Common myeloid progenitor, CD34-positive (primary cell): ENCODE measurements at regions of chr19 and their contacts with region 1.

Region 1: GRCh38 chr19:2084993-2085720 is 11.0 kb downstream of the MOB3A start:
- DNase-seq: peak; percentile 97 to 99 (median 99)
- H3K4me3 ChIP-seq: peak overlapping the region; percentile 19 to 73 (median 53)
- H3K27ac ChIP-seq: peak overlapping the region; percentile 74 to 93
- H3K4me1 ChIP-seq: peaks cover 7 to 91% (median 85%) of the 10 kb centered on the region in 4 experiments
- H3K27me3 ChIP-seq: no peaks in the 10 kb centered on the region

Region 2: DNA sequence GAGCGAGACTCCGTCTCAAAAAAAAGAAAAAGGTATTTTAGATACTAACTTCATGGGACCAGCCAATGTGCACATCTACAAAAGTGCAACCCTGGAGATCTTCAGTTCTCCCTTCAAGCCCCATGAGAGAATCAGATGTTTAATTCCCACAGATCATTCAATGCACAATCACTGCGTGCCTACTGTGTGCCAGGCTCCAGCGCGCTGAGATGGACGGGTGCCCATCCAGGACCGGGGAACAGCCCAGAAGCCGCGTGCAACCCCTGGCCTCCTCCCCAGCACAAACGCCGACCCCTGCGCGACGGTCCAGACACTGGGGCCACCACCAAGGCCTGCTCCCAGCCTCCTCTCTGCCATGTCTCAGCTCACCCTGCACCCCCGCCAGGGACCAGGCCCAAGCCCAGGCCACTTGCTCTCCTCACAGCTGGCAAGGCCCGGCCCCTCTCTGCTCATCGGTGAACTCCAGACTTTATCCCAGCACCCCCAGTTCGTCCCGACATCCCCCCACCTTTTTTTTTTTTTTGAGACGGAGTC is 75.0 kb before region 1 on chr19:
- CTCF ChIA-PET with region 1: no interaction called
- POLR2A ChIA-PET with region 1: no interaction called
- DNase-seq: no peak
- H3K4me3 ChIP-seq: no peak overlapping the region
- H3K27ac ChIP-seq: no peak overlapping the region
- H3K4me1 ChIP-seq: peaks cover 0 to 29% (median 15%) of the 10 kb centered on the region in 4 experiments
- H3K27me3 ChIP-seq: no peaks in the 10 kb centered on the region

Region 3: GRCh38 chr19:2041683-2042484 is 43.3 kb before region 1 on chr19:
- CTCF ChIA-PET with region 1: no interaction called
- POLR2A ChIA-PET with region 1: no interaction called
- DNase-seq: peak; percentile 96 to 99 (median 98)
- H3K4me3 ChIP-seq: peak overlapping the region in 5 of 7 experiments; percentile 29 to 72 (median 54)
- H3K27ac ChIP-seq: peak overlapping the region; percentile 90 to 92
- H3K4me1 ChIP-seq: peaks cover 0 to 46% (median 34%) of the 10 kb centered on the region in 4 experiments
- H3K27me3 ChIP-seq: no peaks in the 10 kb centered on the region

Region 4: DNA sequence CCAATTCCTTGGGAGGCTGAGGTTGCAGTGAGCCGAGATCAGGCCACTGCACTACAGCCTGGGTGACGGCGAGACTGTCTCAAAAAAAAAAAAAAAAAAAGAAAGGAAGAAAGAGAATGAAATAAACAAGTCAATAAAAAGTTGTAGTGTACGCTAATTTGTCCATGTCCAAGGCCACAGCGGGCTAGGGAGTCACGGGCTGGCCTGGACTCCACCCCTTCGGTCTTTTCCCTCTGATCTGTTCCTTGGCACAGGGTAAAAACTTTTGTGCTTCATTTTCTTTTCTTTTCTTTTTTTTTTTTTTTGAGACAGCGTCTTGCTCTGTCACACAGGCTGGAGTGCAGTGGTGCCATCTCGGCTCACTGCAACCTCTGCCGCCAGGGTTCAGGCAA is 14.7 kb before region 1 on chr19:
- CTCF ChIA-PET with region 1: interaction called, 19 read pairs
- POLR2A ChIA-PET with region 1: interaction called, 4 read pairs
- DNase-seq: no peak
- H3K4me3 ChIP-seq: no peak overlapping the region
- H3K27ac ChIP-seq: no peak overlapping the region
- H3K4me1 ChIP-seq: peaks cover 0 to 30% (median 20%) of the 10 kb centered on the region in 4 experiments
- H3K27me3 ChIP-seq: no peaks in the 10 kb centered on the region

Region 5: DNA sequence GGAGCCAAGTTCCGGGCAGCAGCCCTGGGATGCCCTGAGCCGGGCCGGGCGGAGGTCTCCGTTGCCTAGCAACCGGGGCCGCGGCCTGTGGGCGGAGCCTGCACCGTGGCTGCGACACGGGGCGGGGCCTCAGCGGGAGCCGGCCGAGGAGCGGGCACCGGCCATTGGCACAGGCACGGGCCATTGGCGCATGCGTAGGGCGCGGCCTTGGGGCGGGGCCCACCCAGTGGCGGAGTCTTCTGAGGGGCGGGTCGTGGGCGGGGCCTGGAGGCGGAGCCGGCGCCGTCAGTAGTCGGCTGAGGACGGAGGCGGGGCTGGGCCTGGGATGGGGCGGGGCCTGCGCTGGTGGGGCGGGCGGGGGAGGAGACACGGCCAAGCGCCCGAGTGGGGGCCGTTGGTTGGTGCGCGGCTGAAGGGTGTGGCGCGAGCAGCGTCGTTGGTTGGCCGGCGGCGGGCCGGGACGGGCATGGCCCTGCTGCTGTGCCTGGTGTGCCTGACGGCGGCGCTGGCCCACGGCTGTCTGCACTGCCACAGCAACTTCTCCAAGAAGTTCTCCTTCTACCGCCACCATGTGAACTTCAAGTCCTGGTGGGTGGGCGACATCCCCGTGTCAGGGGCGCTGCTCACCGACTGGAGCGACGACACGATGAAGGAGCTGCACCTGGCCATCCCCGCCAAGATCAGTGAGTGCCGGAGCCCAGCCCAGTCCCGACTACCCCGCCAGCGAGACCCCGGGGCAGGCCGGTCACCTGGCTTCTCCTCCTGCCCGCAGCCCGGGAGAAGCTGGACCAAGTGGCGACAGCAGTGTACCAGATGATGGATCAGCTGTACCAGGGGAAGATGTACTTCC is 11.5 kb after region 1 on chr19 and contains the start of gene IZUMO4:
- CTCF ChIA-PET with region 1: interaction called, 24 read pairs
- POLR2A ChIA-PET with region 1: interaction called, 3 read pairs
- DNase-seq: peak; percentile 95 to 98 (median 98)
- H3K4me3 ChIP-seq: peak within 1 kb of the TSS; percentile 61 to 85 (median 82)
- H3K27ac ChIP-seq: peak within 1 kb of the TSS; percentile 68 to 92
- H3K4me1 ChIP-seq: peaks cover 11 to 49% (median 47%) of the 10 kb centered on the region in 4 experiments
- H3K27me3 ChIP-seq: no peaks in the 10 kb centered on the region

Region 6: DNA sequence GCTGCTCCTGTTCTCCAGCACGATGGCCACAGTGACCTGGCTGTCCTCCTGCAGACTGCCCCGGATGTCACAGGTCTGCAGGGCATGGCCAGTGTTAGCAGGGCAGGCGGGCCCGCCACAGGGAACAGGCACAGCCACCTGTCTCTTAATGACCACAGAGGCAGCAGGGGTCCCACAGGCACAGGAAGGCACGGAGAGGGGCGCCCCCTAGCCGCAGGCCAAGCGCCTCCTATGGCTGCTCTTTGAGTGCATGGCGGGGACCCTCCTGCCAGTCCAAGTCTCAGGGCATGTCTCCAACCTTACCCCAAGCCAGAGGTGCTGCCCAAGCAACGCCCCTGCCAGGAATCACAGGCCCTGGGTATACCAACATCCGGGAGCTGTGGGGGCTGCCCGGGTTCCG is 25.7 kb after region 1 on chr19:
- CTCF ChIA-PET with region 1: no interaction called
- POLR2A ChIA-PET with region 1: no interaction called
- DNase-seq: no peak
- H3K4me3 ChIP-seq: no peak overlapping the region
- H3K27ac ChIP-seq: no peak overlapping the region
- H3K4me1 ChIP-seq: no peaks in the 10 kb centered on the region
- H3K27me3 ChIP-seq: no peaks in the 10 kb centered on the region

Region 7: DNA sequence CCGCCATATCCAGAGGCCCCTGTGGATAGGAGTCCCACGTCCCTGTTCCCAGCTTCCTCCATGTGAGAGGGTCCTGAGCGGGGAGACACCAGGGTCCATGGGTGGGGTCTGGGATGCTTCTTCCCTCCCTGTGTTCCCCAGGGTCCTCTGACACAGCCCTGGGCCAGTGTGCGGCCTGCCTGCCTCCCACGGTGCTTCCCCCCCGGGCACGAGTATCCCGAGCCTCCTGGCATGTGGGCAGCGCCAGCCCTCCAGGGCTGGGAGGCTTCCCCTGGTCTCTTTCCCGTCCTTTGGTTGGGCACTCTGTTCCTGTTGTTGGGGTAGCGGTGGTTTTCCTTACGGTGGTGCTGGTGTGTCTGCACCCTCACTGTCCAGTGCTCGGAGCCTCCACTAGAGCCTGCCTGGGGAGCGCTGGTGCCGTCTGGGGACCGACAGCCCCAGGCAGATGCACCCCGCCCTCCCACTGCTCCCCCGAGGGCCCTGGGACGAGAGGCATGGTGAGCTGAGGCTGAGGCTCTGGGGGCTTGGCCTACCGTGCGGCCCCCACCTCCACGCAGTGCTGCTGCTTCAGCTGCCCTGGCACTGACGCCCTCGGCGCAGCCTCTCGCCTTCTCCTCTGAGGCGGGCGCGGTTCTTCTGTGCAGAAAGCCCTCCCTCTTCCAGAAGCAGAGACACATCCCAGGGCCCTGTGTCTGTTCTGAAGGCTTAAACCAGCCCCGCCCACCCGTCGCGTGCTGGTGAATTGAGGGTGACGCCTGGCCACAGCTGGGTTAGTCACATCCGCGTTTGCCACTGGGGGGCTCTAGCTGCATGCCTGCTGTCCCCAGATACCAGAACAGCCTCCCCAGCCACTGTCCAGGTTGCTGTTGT is 123.1 kb after region 1 on chr19:
- CTCF ChIA-PET with region 1: no interaction called
- POLR2A ChIA-PET with region 1: no interaction called
- DNase-seq: peak in 2 of 3 donors; percentile 14 to 25
- H3K4me3 ChIP-seq: no peak overlapping the region
- H3K27ac ChIP-seq: no peak overlapping the region
- H3K4me1 ChIP-seq: no peaks in the 10 kb centered on the region
- H3K27me3 ChIP-seq: no peaks in the 10 kb centered on the region